ENCODE measurements at regions of chr5 and their contacts with region 1.

Region 1: DNA sequence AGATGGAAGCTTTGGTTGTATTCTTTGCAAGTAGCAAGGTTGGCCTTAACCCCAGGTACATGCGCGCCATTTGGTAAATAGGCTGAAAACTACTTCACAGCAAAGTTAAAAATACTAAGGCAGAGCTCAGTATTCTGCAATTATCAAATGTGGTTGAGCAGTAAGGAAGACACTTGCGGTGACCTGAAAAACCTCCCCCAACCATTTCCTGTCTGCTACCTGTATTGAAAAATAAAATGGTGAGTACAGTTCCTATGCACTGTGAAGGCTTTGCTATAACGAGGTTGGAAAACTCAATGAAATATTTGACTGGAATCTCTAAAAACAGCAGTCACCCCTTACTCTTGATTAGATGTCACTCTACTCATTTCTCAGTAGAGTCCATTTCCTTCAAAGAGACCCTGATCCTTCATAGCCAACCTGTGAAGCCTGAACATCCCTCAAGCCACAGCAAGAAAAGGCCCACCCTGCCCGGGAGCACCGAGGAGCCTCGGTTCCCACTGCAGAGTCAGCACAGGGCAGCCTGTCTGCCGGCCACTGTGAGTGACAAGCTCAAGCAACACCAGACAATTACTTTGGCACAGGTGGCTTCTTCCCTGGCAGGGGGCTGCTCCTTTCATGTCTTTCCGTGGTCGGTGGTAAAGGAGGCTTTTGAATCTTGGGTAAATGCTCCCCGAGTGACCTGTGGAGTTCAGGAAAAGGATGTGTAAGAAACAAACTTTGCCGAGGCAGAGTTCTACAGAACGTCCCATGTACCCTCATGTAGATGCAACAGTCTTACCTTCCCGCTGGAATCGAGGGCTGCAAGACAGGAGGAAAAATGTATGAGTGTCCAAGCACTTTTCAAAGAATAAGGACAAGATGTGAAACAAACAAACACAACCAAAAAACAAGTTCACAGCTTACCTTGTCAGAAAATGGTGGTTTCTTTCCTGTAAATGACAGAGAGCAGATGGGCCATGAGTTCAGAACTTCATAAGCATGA is 29.6 kb downstream of the C5orf58 start:
- DNase-seq: peak; percentile 66
- ATAC-seq: peak; percentile 70
- H3K4me3 Mint-ChIP-seq: peak overlapping the region; percentile 78
- H3K27ac Mint-ChIP-seq: peak overlapping the region; percentile 88
- H3K4me1 Mint-ChIP-seq: peaks cover 87% of the 10 kb centered on the region
- H3K27me3 Mint-ChIP-seq: no peaks in the 10 kb centered on the region

Region 2: GRCh38 chr5:170278611-170279452 is 16.5 kb after region 1 on chr5:
- POLR2A ChIA-PET with region 1: interaction called, 1,094 read pairs
- DNase-seq: peak; percentile 87
- ATAC-seq: peak; percentile 76
- H3K4me3 Mint-ChIP-seq: peak overlapping the region; percentile 69
- H3K27ac Mint-ChIP-seq: peak overlapping the region; percentile 88
- H3K4me1 Mint-ChIP-seq: peaks cover 86% of the 10 kb centered on the region
- H3K27me3 Mint-ChIP-seq: no peaks in the 10 kb centered on the region

Region 3: DNA sequence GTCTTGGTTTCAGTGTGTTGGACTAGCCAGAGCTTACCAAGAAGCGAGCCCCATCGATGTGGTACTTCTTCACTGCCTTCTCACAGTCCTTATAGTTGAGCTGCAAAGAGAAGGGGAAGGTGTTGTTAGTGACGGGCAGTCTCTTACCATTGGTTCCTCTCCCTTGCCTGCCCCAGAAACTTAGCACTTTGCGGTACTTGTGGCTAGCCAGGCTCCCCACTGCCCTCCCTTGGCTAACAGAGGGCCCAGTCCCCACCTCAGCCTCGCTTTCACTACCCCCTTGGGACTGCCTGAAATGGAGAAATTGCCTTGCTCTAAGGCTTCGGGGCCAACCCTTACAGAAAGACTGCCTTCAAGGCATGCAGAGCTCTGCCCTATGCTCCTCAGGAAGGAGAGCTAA is 30.9 kb after region 1 on chr5:
- POLR2A ChIA-PET with region 1: interaction called, 1,094 read pairs
- DNase-seq: peak; percentile 88
- ATAC-seq: peak; percentile 68
- H3K4me3 Mint-ChIP-seq: peak overlapping the region; percentile 99
- H3K27ac Mint-ChIP-seq: peak overlapping the region; percentile 97
- H3K4me1 Mint-ChIP-seq: peaks cover 60% of the 10 kb centered on the region
- H3K27me3 Mint-ChIP-seq: no peaks in the 10 kb centered on the region

Region 4: DNA sequence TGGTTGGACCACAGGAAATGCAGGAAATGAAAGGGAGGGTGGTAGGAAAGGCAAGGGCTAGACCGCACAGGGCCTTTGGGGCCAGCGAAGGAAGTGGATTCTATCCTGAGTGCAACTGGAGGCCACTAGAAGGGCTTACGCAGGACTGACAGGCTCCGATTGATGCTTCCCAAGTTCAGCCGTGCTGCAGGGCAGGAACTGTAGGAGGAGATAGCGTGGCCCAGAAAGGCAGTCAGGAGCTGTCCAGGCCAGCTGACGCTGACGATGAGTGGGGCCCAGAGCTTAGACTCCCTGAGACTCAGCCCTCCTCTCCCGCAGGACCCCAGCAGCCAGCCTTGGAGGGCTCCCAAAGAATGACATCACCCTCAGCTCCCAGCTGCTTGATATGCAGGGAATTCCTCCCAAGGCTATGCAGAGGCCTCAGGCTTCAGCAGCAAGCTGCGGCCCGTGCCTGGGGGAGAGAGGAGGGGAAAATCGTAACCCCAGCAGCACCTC is 290.3 kb after region 1 on chr5:
- POLR2A ChIA-PET with region 1: no interaction called
- DNase-seq: no peak
- ATAC-seq: no peak
- H3K4me3 Mint-ChIP-seq: no peak overlapping the region
- H3K27ac Mint-ChIP-seq: no peak overlapping the region
- H3K4me1 Mint-ChIP-seq: peaks cover 2% of the 10 kb centered on the region
- H3K27me3 Mint-ChIP-seq: peaks cover 17% of the 10 kb centered on the region